HAP-1 (cell line): ENCODE measurements at regions of chrX and their contacts with region 1.

Region 1: GRCh38 chrX:153507484-153508178 is 9.8 kb upstream of the ATP2B3 start:
- DNase-seq: peak; percentile 61 to 93
- H3K4me3 ChIP-seq: no peak overlapping the region
- H3K4me1 ChIP-seq: no peaks in the 10 kb centered on the region
- H3K27me3 ChIP-seq: no peaks in the 10 kb centered on the region

Region 2: GRCh38 chrX:153032397-153033118 is 475.1 kb before region 1 on chrX:
- in situ Hi-C with region 1: loop called (anchors 5 kb)
- DNase-seq: peak; percentile 36 to 87
- H3K4me3 ChIP-seq: no peak overlapping the region; the same call in 1 of the 2 replicates
- H3K4me1 ChIP-seq: peaks cover 4% of the 10 kb centered on the region; the same call in 1 of the 2 replicates
- H3K27me3 ChIP-seq: no peaks in the 10 kb centered on the region

Region 3: GRCh38 chrX:153460845-153461244 is 46.8 kb before region 1 on chrX:
- in situ Hi-C with region 1: loop called (anchors 5 kb)
- DNase-seq: peak; percentile 28 to 79
- H3K4me3 ChIP-seq: no peak overlapping the region
- H3K4me1 ChIP-seq: no peaks in the 10 kb centered on the region
- H3K27me3 ChIP-seq: no peaks in the 10 kb centered on the region